Activated T-helper 2 cell treated with anti-CD3 and anti-CD28 coated beads, Interferon-gamma antibody, Interleukin-2, Interleukin-4, amounts not matched to agents 10 μg/mL and 5 μg/mL and 100 μg/mL, durations not matched to agents 14 hours and 24 hours and 36 hours (primary cell): ENCODE measurements at regions of chr1 and their contacts with region 1.

Region 1: DNA sequence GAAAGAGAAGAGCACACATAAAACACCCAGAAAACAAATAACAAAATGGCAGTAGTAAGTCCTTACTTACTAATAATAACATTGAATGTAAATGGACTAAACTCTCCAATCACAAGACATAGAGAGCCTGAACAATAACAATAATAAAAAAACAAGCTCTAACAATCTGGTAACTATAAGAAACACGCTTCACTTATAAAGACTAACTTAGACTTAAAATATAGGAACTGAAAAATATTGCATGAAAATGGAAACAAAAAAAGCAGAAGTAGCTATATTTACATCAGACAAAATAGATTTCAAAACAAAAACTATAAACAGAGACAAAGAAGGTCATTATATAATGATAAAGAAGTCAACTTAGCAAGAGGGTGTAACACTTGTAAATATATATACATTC is 83.1 kb upstream of the LYPLAL1 start:
- DNase-seq: no peak
- H3K4me3 Mint-ChIP-seq: no peak overlapping the region
- H3K27ac Mint-ChIP-seq: no peak overlapping the region
- H3K4me1 Mint-ChIP-seq: no peaks in the 10 kb centered on the region
- H3K27me3 Mint-ChIP-seq: no peaks in the 10 kb centered on the region

Region 2: DNA sequence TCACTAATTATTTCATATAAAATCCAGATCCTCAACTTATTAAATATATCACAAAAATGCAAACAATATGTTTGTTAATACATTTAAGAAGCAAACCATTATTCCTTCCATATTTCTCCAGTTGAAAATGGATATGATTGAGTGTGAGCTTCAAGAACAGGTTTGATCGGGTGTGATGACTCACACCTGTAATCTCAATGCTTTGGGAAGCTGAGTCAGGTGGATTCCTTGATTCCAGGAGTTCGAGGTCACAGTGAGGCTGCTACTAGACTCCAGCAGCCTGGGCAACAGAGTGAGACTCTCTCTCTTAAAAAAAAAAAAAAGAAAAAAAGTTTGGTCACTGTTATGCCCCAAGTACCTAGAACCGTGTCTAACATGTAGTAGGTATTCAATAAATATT is 848.4 kb before region 1 on chr1:
- intact Hi-C with region 1: loop called (anchors 5 kb)
- DNase-seq: no peak
- H3K4me3 Mint-ChIP-seq: no peak overlapping the region
- H3K27ac Mint-ChIP-seq: no peak overlapping the region
- H3K4me1 Mint-ChIP-seq: no peaks in the 10 kb centered on the region
- H3K27me3 Mint-ChIP-seq: no peaks in the 10 kb centered on the region

Region 3: GRCh38 chr1:219359126-219359525 is 268.5 kb after region 1 on chr1:
- intact Hi-C with region 1: no loop called
- DNase-seq: no peak
- H3K4me3 Mint-ChIP-seq: no peak overlapping the region
- H3K27ac Mint-ChIP-seq: no peak overlapping the region
- H3K4me1 Mint-ChIP-seq: no peaks in the 10 kb centered on the region
- H3K27me3 Mint-ChIP-seq: no peaks in the 10 kb centered on the region